Prostate gland (tissue), 2 donors: ENCODE measurements at regions of chr14 and their contacts with region 1.

Region 1: GRCh38 chr14:99793213-99794150 is at the start of gene EML1:
- DNase-seq: peak; percentile 75
- H3K4me3 ChIP-seq: peak within 1 kb of the TSS; percentile 53 to 54
- H3K27ac ChIP-seq: peak within 1 kb of the TSS; percentile 72 to 76
- H3K4me1 ChIP-seq: no peaks in the 10 kb centered on the region
- H3K27me3 ChIP-seq: no peaks in the 10 kb centered on the region
- CTCF ChIP-seq: no peak
- POLR2A ChIP-seq: no peak
- total RNA-seq, gene EML1: 7.0 to 31.8 TPM

Region 2: DNA sequence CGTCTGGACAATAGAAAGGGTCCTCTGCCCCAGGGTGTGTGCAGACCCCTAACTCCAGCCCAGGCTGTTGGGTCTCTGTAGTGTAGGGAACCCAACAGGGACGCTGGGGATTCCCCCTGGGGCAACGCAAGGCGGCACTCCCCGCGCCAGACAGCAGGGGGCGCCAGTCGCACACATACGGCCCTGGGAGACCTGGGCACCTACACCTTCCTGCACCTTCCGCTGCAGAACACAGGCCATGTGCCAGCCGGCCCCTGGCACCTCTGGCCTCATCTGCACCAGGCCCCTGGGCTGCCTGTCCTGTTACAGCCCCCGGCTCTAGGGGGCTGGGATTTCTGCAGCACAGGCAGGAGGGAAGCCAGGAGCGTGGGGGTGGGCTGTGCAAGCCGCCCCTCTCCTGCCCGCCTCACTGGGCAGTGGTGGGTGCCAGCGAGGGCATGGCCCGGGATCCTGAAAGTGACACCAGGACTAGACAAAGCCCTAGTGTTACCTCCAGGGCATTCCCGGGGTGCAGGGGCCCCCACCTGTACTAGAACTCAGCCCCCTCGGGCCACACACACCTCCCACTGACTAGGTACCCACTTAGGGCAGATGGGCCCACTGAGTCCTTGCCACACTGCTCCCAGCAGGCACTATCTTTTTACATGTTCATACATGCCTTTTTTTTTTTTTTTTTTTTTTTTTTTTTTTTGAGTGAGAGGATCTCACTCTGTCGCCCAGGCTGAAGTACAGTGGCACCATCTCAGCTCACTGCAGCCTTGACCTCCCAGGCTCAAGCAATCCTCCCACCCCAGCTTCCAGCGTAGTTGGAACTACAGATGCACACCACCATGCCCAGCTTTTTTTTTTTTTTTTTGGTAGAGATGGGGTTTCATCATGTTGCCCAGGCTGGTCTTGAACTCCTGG is 274.8 kb before region 1 on chr14:
- intact Hi-C with region 1: loop called (anchors 10 kb)
- DNase-seq: peak; percentile 73
- H3K4me3 ChIP-seq: no peak overlapping the region
- H3K27ac ChIP-seq: no peak overlapping the region
- H3K4me1 ChIP-seq: peaks cover 10% of the 10 kb centered on the region
- H3K27me3 ChIP-seq: no peaks in the 10 kb centered on the region
- CTCF ChIP-seq: peak; percentile 97 to 98 (median 98)
- POLR2A ChIP-seq: no peak

Region 3: DNA sequence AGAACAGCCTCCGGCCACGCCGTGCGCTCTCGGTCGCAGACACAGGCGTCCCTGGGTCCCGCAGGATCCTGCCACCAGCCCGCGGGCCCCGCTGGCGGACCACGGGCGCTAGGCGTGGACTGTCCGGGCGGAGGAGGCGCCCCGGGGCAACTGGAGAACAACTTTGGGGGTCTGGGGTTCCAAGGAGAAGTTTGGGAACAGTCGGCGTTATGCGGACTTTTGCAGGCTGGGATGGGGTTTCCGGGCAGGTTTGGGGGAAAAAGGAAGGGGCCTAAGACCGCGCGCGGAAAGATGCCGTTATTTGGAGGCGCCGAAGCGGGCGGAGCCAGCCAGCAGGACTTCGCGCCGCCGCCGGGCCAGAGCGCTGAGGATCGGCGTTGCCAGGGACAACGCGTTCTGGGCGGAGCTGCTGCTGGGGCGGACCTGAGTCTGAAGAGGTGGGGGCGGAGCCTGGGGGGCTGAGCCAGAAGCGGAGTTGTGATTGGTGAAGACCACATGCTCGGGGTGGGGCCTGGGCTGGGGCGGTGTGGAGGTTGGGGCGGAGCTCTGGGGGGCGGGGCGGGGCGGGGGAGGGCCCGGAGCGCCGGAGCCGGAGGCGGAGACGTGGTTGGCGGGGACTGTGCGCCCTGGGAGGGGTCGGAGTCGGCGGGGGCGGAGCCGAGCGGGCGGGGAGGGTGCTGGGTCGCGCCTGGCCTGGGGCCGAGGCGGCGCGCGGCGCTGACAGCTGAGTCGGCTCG is 109.7 kb before region 1 on chr14 and contains the start of gene CYP46A1:
- intact Hi-C with region 1: loop called (anchors 5 kb)
- DNase-seq: peak; percentile 100
- H3K4me3 ChIP-seq: peak within 1 kb of the TSS; percentile 62 to 78
- H3K27ac ChIP-seq: peak within 1 kb of the TSS; percentile 44 to 68
- H3K4me1 ChIP-seq: peaks cover 7% of the 10 kb centered on the region
- H3K27me3 ChIP-seq: no peaks in the 10 kb centered on the region
- CTCF ChIP-seq: peak in 2 of 4 experiments; percentile 22 to 43
- POLR2A ChIP-seq: no peak
- total RNA-seq, gene CYP46A1: 0.46 to 6.5 TPM

Region 4: GRCh38 chr14:99729991-99730868 is 63.3 kb before region 1 on chr14:
- intact Hi-C with region 1: loop called (anchors 5 kb)
- DNase-seq: peak; percentile 43
- H3K4me3 ChIP-seq: peak overlapping the region; percentile 35 to 47
- H3K27ac ChIP-seq: no peak overlapping the region
- H3K4me1 ChIP-seq: no peaks in the 10 kb centered on the region
- H3K27me3 ChIP-seq: no peaks in the 10 kb centered on the region
- CTCF ChIP-seq: peak; percentile 71 to 88 (median 86)
- POLR2A ChIP-seq: no peak

Region 5: DNA sequence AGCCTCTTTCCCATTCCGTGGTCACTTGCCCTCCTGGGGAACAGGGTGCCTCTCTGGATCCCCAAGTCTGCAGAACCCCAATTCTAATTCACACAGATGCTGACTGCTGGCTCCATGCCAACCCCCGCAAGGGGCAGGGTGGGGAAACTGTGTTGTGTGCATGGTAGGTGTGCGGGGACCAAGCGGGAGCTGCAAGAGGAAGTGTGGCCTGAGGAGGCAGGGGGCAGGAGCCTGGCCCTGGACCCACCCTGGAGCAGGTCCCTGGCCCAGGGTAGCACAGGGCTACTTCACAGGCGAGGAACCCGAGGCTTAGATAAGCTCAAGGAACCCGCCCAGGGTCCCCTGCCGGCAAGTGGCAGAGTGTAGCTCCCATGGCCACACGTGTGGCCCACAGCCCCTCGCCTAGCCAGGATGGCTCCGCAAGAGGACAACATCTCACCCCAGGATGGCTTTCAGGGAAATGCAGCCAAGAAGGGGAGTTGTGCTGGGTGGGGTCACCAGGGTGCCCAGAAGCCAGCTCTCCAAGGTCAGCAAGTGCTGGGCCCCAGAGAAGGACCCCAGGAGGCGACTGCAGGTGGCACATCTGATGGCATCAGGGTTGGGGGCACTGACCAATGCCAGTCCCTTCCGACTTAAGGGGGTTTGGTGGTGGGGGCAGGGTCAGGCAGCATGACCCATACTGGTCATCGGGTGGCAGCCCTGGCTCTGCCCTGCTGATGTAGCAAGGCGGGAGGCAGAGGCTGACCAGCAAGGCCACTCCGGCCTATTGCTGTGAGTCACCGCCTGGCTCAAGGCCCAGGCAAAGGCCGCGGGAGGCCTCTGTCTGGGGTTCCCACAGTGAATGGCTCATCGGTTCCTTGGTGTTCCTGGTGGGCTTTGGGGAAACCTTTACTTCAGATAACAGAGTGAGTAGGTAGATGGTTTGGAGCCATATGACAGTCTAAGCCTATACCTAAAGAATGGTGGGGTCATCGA is 37.6 kb before region 1 on chr14:
- intact Hi-C with region 1: loop called (anchors 5 kb)
- DNase-seq: no peak
- H3K4me3 ChIP-seq: no peak overlapping the region
- H3K27ac ChIP-seq: no peak overlapping the region
- H3K4me1 ChIP-seq: no peaks in the 10 kb centered on the region
- H3K27me3 ChIP-seq: no peaks in the 10 kb centered on the region
- CTCF ChIP-seq: no peak
- POLR2A ChIP-seq: no peak

Region 6: GRCh38 chr14:99884834-99885648 is 91.6 kb after region 1 on chr14:
- intact Hi-C with region 1: loop called (anchors 10 kb)
- DNase-seq: peak; percentile 34
- H3K4me3 ChIP-seq: no peak overlapping the region
- H3K27ac ChIP-seq: no peak overlapping the region
- H3K4me1 ChIP-seq: no peaks in the 10 kb centered on the region
- H3K27me3 ChIP-seq: no peaks in the 10 kb centered on the region
- CTCF ChIP-seq: peak; percentile 48 to 85 (median 76)
- POLR2A ChIP-seq: no peak